H1 (cell line): ENCODE measurements at regions of chr11 and their contacts with region 1.

Region 1: DNA sequence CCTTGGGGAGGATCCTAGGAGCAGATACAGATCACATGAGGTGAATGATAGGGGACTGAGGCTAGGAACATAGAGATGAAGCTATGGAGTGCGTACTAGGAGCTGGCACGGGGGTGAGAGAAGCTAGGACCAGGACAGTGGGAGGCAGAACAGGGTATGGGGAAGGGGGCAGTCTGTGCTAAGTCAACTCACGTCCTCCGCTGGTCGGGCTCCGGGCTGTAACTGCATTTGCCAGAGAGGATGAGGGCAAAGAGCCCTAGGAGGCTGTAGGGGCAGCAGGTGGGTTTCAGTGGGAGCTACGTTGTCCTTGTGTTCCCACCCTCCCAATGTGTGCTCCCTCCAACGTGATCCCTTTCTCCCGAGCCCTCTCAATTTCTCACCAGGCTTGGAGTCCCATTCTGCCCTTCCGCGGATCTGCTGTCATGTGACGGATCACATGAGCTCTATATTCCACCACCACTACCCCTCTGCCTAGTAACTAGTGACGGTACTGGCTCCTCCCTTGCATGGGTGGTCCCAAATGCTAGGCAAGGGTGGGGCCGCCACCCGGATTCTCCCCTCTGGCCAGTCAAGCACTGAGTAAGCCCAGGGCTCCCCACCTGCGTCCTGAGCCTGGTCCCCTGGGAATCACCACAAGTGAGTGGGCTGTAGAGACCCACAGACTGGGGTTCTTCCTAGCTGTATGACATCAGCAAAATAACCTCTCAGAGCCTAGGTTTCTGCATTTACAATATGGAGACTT is at the start of gene TPP1:
- DNase-seq: peak in 1 of 2 experiments; percentile 91
- H3K4me3 ChIP-seq: peak within 1 kb of the TSS; percentile 72 to 97 (median 89)
- H3K27ac ChIP-seq: peak within 1 kb of the TSS; percentile 39; the same call in 1 of the 2 replicates
- H3K4me1 ChIP-seq: peaks cover 0 to 7% (median 4%) of the 10 kb centered on the region in 4 experiments; a peak in 3 of 7 replicates
- H3K27me3 ChIP-seq: no peaks in the 10 kb centered on the region
- CTCF ChIP-seq: no peak
- EP300 ChIP-seq: 0 out of 3 replicates have a peak, but pooled peaks of 1 of the 2 experiments have one; percentile 56
- POLR2A ChIP-seq: peak; percentile 72 to 93
- RAD21 ChIP-seq: no peak
- total RNA-seq, gene TPP1: 34.9 and 36.1 TPM in 2 replicates

Region 2: DNA sequence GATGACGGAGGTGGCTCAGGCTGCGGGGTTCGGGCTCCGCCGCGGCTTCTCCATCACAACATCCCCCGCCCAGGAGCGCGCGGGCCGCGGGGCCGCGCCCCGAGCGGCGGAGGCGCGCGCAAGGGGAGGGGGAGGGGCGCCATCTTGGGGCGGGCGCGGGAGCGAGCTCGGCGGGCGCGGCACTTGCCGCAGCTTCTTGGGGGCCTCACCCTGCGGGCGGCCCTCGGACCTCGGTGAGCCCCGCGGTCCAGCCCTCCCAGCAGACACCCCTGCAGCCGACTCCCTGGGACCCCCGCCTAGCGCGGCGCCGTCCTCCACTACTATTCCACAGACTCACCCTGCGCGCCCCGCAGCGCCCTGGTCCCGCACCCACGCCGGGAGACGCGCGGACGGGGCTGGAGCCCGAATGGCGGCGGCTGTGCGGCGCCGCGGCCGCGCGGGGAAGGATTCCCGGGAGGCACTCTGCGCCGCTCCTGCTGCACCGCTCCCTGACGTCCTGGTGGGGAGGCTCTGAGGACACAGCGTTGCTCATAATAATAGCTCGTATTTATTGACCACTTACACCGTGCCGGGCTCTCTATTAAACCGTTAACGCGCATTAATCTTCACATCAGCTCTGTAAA is 200.1 kb before region 1 on chr11 and contains the start of gene APBB1:
- CTCF ChIA-PET with region 1: no interaction called
- POLR2A ChIA-PET with region 1: no interaction called
- DNase-seq: peak in 1 of 2 experiments; percentile 81
- H3K4me3 ChIP-seq: peak within 1 kb of the TSS; percentile 78 to 97 (median 86)
- H3K27ac ChIP-seq: no peak within 1 kb of the TSS
- H3K4me1 ChIP-seq: peaks cover 2 to 5% (median 4%) of the 10 kb centered on the region in 4 experiments; a peak in 4 of 7 replicates
- H3K27me3 ChIP-seq: peaks cover 1 to 13% (median 7%) of the 10 kb centered on the region in 4 experiments
- CTCF ChIP-seq: no peak
- EP300 ChIP-seq: no peak
- POLR2A ChIP-seq: peak in 1 of 2 experiments; percentile 65; a peak in 2 of 3 replicates
- RAD21 ChIP-seq: no peak
- total RNA-seq, gene APBB1: 23.6 and 23.9 TPM in 2 replicates

Region 3: GRCh38 chr11:6603287-6604080 is 15.7 kb before region 1 on chr11 and contains the starts of genes ILK and RRP8:
- CTCF ChIA-PET with region 1: interaction called, 18 read pairs
- POLR2A ChIA-PET with region 1: interaction called, 31 read pairs
- DNase-seq: peak in 1 of 2 experiments; percentile 91
- H3K4me3 ChIP-seq: peak within 1 kb of the TSS; percentile 79 to 99 (median 93)
- H3K27ac ChIP-seq: peak within 1 kb of the TSS; percentile 63; the same call in 1 of the 2 replicates
- H3K4me1 ChIP-seq: peaks cover 5 to 21% (median 8%) of the 10 kb centered on the region in 4 experiments; a peak in 6 of 7 replicates
- H3K27me3 ChIP-seq: no peaks in the 10 kb centered on the region
- CTCF ChIP-seq: no peak
- EP300 ChIP-seq: peak in 1 of 2 experiments; percentile 79; a peak in 1 of 3 replicates
- POLR2A ChIP-seq: peak in 1 of 2 experiments; percentile 81; a peak in 2 of 3 replicates
- RAD21 ChIP-seq: peak in 1 of 2 experiments; percentile 17; a peak in 2 of 4 replicates
- total RNA-seq, gene ILK: 91.4 and 103 TPM in 2 replicates
- total RNA-seq, gene RRP8: 14.9 and 15.4 TPM in 2 replicates

Region 4: DNA sequence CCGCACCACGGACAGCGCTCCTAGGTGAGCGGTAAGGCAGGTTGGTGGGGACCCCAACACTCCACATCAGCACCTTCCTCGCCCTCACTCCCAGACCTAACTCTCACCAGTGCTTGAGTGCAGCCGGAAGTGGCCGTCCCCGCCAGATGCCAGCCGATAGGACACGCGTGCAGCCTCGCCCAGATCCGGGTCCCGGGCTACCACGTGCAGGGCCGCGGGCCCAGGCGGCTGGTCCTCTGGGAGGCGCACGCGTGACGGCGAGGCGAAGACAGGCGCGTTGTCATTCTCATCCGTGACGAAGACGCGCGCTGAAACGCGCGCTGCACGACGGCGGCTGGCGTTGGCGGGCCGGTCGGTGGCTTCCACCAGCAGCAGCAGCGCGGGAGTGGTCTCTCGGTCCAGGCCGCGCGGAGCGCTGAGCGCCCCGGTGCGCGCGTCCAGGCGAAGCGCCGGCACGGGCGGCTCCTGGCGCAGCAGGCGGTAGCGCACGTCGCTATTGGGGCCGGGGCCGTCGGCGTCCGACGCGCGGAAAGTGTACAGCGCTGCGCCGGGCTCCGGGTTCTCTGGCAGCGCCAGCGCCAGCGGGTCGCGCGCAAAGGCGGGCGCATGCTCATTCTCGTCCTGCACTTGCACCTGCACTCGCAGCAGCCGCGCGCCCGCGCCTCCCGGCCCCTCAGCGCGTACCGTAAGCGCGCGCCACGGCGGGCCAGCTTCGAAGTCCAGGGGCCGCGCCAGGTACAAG is 10.9 kb after region 1 on chr11:
- CTCF ChIA-PET with region 1: interaction called, 18 read pairs
- POLR2A ChIA-PET with region 1: interaction called, 9 read pairs
- DNase-seq: peak in 1 of 2 experiments; percentile 82
- H3K4me3 ChIP-seq: peak overlapping the region; percentile 31 to 60 (median 40)
- H3K27ac ChIP-seq: no peak overlapping the region
- H3K4me1 ChIP-seq: peaks cover 0 to 6% (median 2%) of the 10 kb centered on the region in 4 experiments; a peak in 3 of 7 replicates
- H3K27me3 ChIP-seq: peaks cover 13 to 43% (median 34%) of the 10 kb centered on the region in 4 experiments
- CTCF ChIP-seq: no peak
- EP300 ChIP-seq: no peak
- POLR2A ChIP-seq: no peak
- RAD21 ChIP-seq: peak in 1 of 2 experiments; percentile 1; a peak in 1 of 4 replicates

Region 5: GRCh38 chr11:6746626-6747025 is 127.5 kb after region 1 on chr11:
- CTCF ChIA-PET with region 1: no interaction called
- POLR2A ChIA-PET with region 1: no interaction called
- DNase-seq: no peak
- H3K4me3 ChIP-seq: no peak overlapping the region
- H3K27ac ChIP-seq: no peak overlapping the region
- H3K4me1 ChIP-seq: no peaks in the 10 kb centered on the region
- H3K27me3 ChIP-seq: no peaks in the 10 kb centered on the region
- CTCF ChIP-seq: no peak
- EP300 ChIP-seq: no peak
- POLR2A ChIP-seq: no peak
- RAD21 ChIP-seq: no peak

Region 6: GRCh38 chr11:6790546-6790945 is 171.4 kb after region 1 on chr11:
- CTCF ChIA-PET with region 1: no interaction called
- POLR2A ChIA-PET with region 1: no interaction called
- DNase-seq: no peak
- H3K4me3 ChIP-seq: no peak overlapping the region
- H3K27ac ChIP-seq: no peak overlapping the region
- H3K4me1 ChIP-seq: no peaks in the 10 kb centered on the region
- H3K27me3 ChIP-seq: no peaks in the 10 kb centered on the region
- CTCF ChIP-seq: no peak
- EP300 ChIP-seq: no peak
- POLR2A ChIP-seq: no peak
- RAD21 ChIP-seq: no peak